OCI-LY7 (cell line): ENCODE measurements at regions of chr3 and their contacts with region 1.

Region 1: GRCh38 chr3:51371943-51372557 is 13.0 kb upstream of the MANF start:
- DNase-seq: peak; percentile 57
- H3K4me3 ChIP-seq: no peak overlapping the region
- H3K27ac ChIP-seq: no peak overlapping the region
- H3K4me1 ChIP-seq: no peaks in the 10 kb centered on the region
- CTCF ChIP-seq: peak; percentile 79

Region 2: DNA sequence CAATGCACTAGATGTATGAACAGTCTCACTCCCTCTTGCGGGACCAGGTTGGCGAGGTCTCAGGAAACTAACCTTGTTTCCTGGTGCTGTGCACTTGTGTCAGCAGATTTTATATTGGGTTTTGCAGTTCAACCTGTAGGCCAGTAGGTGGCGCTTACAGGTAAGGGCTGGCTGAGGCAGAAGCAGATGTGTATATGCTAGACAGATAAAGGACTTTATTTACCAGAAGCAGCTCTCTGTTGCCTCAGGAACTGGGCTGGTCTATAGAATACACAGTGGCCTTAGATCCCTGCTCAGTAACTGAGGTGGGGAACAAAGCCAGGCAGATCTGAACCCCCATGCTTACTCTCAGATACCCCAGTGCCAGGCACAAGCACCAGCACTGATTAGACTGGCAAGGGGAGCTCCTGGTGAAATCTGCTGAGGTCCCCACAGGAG is 400.5 kb before region 1 on chr3:
- CTCF ChIA-PET with region 1: no interaction called
- POLR2A ChIA-PET with region 1: no interaction called
- intact Hi-C with region 1: loop called (anchors 2 kb)
- DNase-seq: peak; percentile 68
- H3K4me3 ChIP-seq: no peak overlapping the region
- H3K27ac ChIP-seq: no peak overlapping the region
- H3K4me1 ChIP-seq: no peaks in the 10 kb centered on the region
- CTCF ChIP-seq: peak; percentile 96

Region 3: GRCh38 chr3:51099794-51100535 is 272.1 kb before region 1 on chr3:
- CTCF ChIA-PET with region 1: no interaction called
- POLR2A ChIA-PET with region 1: no interaction called
- intact Hi-C with region 1: loop called (anchors 10 kb)
- DNase-seq: peak; percentile 11
- H3K4me3 ChIP-seq: no peak overlapping the region
- H3K27ac ChIP-seq: no peak overlapping the region
- H3K4me1 ChIP-seq: no peaks in the 10 kb centered on the region
- CTCF ChIP-seq: peak; percentile 75